ENCODE measurements at regions of chr16 and their contacts with region 1.

Region 1: GRCh38 chr16:30032083-30032819 is 1.2 kb upstream of the TLCD3B start:
- DNase-seq: peak; percentile 83
- H3K4me3 ChIP-seq: no peak overlapping the region; a peak in 1 of 4 replicates
- H3K27ac ChIP-seq: peak overlapping the region in 1 of 2 experiments; percentile 83; a peak in 1 of 4 replicates
- H3K4me1 ChIP-seq: peaks cover 6 to 28% of the 10 kb centered on the region in 2 experiments; a peak in 2 of 4 replicates
- H3K27me3 ChIP-seq: no peaks in the 10 kb centered on the region
- CTCF ChIP-seq: peak; percentile 90
- EP300 ChIP-seq: no peak
- RAD21 ChIP-seq: peak; percentile 92

Region 2: DNA sequence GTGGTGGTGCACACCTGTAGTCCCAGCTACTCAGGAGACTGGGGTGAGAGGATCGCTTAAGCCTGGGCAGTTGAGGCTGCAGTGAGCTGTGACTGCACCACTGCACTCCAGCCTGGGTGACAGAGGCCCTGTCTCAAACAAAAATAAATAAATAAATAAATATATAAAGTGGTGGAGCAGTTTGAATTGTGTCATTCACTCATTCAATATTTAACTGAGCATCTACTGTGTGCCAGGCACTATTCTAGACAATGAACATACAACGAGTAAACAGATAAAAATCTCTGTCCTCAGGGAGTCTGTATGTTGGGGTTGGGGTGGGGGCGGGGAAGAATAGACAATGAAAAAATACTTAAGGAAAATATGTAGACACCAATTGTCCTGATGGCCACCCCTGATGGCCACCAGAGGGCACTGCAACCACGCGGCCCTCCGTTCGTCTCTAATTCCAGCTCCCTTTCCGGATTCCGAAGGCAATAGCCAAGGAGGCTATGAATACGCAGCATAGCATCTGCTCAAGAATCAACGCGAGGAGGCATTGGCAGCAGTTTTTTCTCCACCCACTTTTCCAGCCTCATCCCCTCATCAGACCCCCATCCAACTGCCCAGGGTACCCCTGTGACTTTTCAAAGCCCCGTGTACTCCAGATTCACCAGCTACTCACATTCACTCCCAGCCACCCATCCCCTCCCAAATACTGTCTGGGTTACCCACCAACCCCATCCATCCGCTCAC is 331.8 kb before region 1 on chr16:
- CTCF ChIA-PET with region 1: interaction called, 12 read pairs
- POLR2A ChIA-PET with region 1: no interaction called
- DNase-seq: peak; percentile 88
- H3K4me3 ChIP-seq: no peak overlapping the region; a peak in 1 of 4 replicates
- H3K27ac ChIP-seq: no peak overlapping the region
- H3K4me1 ChIP-seq: no peaks in the 10 kb centered on the region; a peak in 1 of 4 replicates
- H3K27me3 ChIP-seq: no peaks in the 10 kb centered on the region
- CTCF ChIP-seq: peak; percentile 78
- EP300 ChIP-seq: no peak
- RAD21 ChIP-seq: peak; percentile 88

Region 3: DNA sequence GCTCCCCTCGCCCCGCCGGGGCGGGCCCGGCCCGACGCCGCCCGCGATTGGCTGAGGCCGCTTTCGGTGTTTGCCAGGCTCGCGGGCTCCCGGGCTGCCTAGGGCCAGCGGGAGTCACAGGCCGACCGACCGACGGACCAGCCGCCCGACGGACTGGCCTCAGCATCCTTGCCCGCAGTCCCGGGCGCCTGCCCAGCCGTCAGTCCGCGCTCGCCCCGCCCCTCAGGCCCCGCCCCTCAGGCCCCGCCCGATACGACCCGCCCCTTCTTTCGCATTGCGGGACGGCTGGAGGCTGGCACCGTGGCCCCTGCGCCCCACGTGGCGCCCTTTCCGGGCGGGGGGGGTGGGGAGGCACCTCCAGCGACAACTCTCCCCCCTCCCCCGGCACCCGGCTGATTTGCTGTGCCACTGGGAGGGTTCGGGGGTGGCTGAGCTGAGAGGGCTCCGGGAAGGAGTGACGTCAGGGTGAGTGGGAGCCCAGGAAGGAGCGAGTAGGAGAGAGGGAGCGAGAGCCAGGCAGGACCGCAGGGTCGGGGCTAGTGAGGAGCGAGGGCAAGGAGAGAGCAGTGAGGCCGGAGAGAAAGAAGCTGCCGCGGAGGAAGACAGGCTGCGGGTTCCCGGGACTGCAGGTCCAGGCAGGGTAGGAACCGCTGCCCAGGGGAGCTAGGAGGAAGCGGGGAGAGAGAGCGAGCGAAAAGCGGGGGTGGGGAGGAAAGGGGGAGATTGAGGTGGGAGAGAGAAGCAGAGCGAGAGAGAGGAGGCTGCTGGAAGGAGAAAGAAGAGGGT is 132.0 kb before region 1 on chr16 and contains the start of gene ASPHD1:
- CTCF ChIA-PET with region 1: interaction called, 14 read pairs
- POLR2A ChIA-PET with region 1: interaction called, 5 read pairs
- DNase-seq: peak; percentile 92
- H3K4me3 ChIP-seq: peak within 1 kb of the TSS; percentile 54 to 89
- H3K27ac ChIP-seq: peak within 1 kb of the TSS; percentile 90 to 94
- H3K4me1 ChIP-seq: peaks cover 0 to 20% of the 10 kb centered on the region in 2 experiments; a peak in 1 of 4 replicates
- H3K27me3 ChIP-seq: no peaks in the 10 kb centered on the region
- CTCF ChIP-seq: no peak
- EP300 ChIP-seq: no peak
- RAD21 ChIP-seq: no peak
- polyA plus RNA-seq, gene ASPHD1: 29.0 and 35.1 TPM in 2 replicates

Region 4: GRCh38 chr16:29951625-29952365 is 80.5 kb before region 1 on chr16:
- CTCF ChIA-PET with region 1: no interaction called
- POLR2A ChIA-PET with region 1: no interaction called
- DNase-seq: no peak
- H3K4me3 ChIP-seq: no peak overlapping the region
- H3K27ac ChIP-seq: no peak overlapping the region
- H3K4me1 ChIP-seq: no peaks in the 10 kb centered on the region
- H3K27me3 ChIP-seq: no peaks in the 10 kb centered on the region
- CTCF ChIP-seq: no peak
- EP300 ChIP-seq: no peak
- RAD21 ChIP-seq: no peak

Region 5: GRCh38 chr16:29973384-29974246 is 58.6 kb before region 1 on chr16 and contains the start of gene TAOK2:
- CTCF ChIA-PET with region 1: interaction called, 10 read pairs
- POLR2A ChIA-PET with region 1: interaction called, 6 read pairs
- DNase-seq: peak; percentile 99
- H3K4me3 ChIP-seq: peak within 1 kb of the TSS; percentile 87 to 91
- H3K27ac ChIP-seq: peak within 1 kb of the TSS; percentile 69 to 88
- H3K4me1 ChIP-seq: peaks cover 20 to 25% of the 10 kb centered on the region in 2 experiments; a peak in 3 of 4 replicates
- H3K27me3 ChIP-seq: no peaks in the 10 kb centered on the region
- CTCF ChIP-seq: no peak
- EP300 ChIP-seq: peak in 1 of 2 experiments; percentile 75; a peak in 3 of 4 replicates
- RAD21 ChIP-seq: no peak
- polyA plus RNA-seq, gene TAOK2: 21.9 and 23.1 TPM in 2 replicates

Region 6: DNA sequence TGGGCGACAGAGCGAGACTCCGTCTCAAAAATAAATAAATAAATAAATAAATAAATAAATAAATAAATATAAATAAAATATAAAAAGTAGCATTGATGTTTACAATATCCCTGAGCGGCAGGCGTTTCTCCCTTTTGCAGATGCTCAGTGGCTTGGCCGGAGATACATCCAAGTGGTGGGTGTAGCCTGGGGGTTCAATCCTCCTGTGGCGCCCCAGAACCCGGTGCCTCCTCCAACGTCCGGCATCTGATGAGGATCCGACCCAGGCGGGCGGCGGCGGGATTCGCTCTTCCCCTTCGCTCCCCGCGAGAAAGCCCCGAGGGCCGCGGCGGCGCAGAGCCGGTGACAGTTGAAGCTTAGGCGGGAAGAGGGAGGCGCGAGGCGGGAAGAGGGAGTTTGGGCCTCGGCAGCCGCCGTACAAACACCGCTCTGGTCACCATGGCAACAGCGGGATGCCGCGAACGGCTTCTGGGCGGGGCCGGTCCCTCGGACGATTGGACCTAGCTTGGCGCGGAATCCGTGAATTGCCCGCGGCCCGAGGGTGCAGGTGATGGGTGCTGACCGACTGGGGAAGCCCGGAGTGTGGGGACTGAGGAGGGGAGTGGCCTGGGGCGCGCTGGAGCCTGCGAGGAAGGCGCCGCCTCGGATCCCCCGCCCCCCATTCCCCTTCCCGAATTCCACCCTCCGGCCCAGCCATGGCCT is 20.6 kb after region 1 on chr16:
- CTCF ChIA-PET with region 1: interaction called, 31 read pairs
- POLR2A ChIA-PET with region 1: interaction called, 4 read pairs
- DNase-seq: peak; percentile 97
- H3K4me3 ChIP-seq: peak overlapping the region; percentile 68 to 97
- H3K27ac ChIP-seq: peak overlapping the region; percentile 58 to 70; a peak in 3 of 4 replicates
- H3K4me1 ChIP-seq: peaks cover 5% of the 10 kb centered on the region in 2 experiments; a peak in 2 of 4 replicates
- H3K27me3 ChIP-seq: no peaks in the 10 kb centered on the region
- CTCF ChIP-seq: no peak
- EP300 ChIP-seq: peak; percentile 26 to 33; a peak in 2 of 4 replicates
- RAD21 ChIP-seq: no peak

Measured in SK-N-SH (cell line).